Activated naive CD4-positive, alpha-beta T cell treated with anti-CD3 and anti-CD28 coated beads for 36 hours (primary cell): ENCODE measurements at regions of chr15 and their contacts with region 1.

Region 1: DNA sequence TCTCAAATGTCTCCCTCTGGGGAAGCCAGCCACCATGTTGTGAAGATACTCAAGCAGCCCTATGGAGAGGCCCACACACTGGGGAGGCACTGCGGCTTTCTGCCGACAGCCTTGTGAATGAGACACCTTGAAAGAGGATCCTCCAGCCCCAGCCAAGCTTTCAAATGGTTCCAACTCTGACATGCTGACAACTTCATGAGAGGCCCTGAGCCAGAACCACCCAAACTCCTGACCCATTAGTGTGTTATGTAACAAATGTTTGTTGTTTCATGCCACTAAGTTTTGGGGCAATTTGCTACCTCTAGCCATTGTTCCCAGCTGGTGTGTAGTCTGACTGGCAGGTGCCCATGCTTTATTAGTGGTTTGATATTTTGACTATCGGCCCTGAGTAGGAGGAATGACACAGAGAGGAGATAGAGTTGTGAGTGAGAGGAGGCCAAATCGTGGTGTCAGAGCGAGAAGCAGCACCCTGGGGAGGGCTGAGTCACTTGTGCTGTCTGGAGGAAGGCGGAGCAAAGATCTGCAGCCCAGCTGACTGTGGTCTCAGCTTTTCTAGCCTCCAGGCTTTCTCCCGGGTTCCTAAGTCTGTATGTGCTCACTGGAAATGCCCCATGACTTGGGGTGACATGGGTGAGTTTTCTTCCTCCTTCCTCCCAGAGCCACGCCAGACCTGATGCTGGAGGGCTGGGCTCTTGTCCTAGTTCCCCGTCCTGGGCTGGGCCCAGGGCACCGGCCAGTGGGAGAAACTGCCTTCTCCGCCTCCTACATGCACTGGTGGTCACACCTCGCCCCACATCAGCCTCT is 56.7 kb upstream of the BLM start:
- DNase-seq: peak; percentile 90
- H3K4me3 Mint-ChIP-seq: peak overlapping the region; percentile 32
- H3K27ac Mint-ChIP-seq: peak overlapping the region; percentile 0
- H3K4me1 Mint-ChIP-seq: peaks cover 72% of the 10 kb centered on the region
- H3K27me3 Mint-ChIP-seq: peaks cover 21% of the 10 kb centered on the region

Region 2: DNA sequence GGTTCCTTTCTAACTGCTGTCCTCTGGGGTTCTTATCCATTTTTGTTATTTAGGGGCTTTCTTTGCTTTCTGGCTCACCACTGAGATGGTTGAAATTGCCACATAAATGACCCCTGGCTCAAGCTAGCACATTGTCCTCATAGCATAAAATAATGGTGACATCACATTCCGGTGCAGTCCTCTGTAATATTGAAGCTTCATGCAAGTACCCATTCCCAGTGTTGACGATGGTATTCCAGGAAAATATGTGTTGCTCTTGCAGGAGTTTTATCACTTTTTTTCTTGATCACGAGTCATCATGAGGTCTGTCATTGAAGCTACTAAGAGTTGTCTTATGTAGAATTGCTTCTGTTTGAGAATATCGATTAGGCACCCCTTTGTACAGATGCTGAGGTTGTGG is 74.5 kb before region 1 on chr15:
- CTCF ChIA-PET with region 1: no interaction called
- intact Hi-C with region 1: no loop called
- DNase-seq: no peak
- H3K4me3 Mint-ChIP-seq: no peak overlapping the region
- H3K27ac Mint-ChIP-seq: no peak overlapping the region
- H3K4me1 Mint-ChIP-seq: peaks cover 67% of the 10 kb centered on the region
- H3K27me3 Mint-ChIP-seq: no peaks in the 10 kb centered on the region

Region 3: GRCh38 chr15:90677807-90678790 is 17.7 kb after region 1 on chr15:
- CTCF ChIA-PET with region 1: no interaction called
- intact Hi-C with region 1: loop called (anchors 1 kb)
- DNase-seq: peak; percentile 52
- H3K4me3 Mint-ChIP-seq: peak overlapping the region; percentile 30
- H3K27ac Mint-ChIP-seq: peak overlapping the region; percentile 78
- H3K4me1 Mint-ChIP-seq: peaks cover 36% of the 10 kb centered on the region
- H3K27me3 Mint-ChIP-seq: no peaks in the 10 kb centered on the region

Region 4: GRCh38 chr15:90686435-90687218 is 26.2 kb after region 1 on chr15:
- CTCF ChIA-PET with region 1: interaction called, 4 read pairs
- intact Hi-C with region 1: loop called (anchors 1 kb)
- DNase-seq: peak; percentile 65
- H3K4me3 Mint-ChIP-seq: no peak overlapping the region
- H3K27ac Mint-ChIP-seq: peak overlapping the region; percentile 92
- H3K4me1 Mint-ChIP-seq: peaks cover 24% of the 10 kb centered on the region
- H3K27me3 Mint-ChIP-seq: no peaks in the 10 kb centered on the region